Activated T-helper 1 cell treated with anti-CD3 and anti-CD28 coated beads, Interleukin-12 subunit alpha, Interleukin-12 subunit beta, Interleukin-2, Interleukin-4 antibody, amounts not matched to agents 30 ng/mL and 10 ng/mL and 1 ng/mL, durations not matched to agents 14 hours and 24 hours and 36 hours (primary cell): ENCODE measurements at regions of chr3 and their contacts with region 1.

Region 1: GRCh38 chr3:67654099-67654843 is at the start of gene SUCLG2:
- DNase-seq: peak; percentile 78
- H3K4me3 Mint-ChIP-seq: peak within 1 kb of the TSS; percentile 82
- H3K27ac Mint-ChIP-seq: peak within 1 kb of the TSS; percentile 85
- H3K4me1 Mint-ChIP-seq: peaks cover 59% of the 10 kb centered on the region
- H3K27me3 Mint-ChIP-seq: no peaks in the 10 kb centered on the region
- total RNA-seq, gene SUCLG2: 30.3 and 31.0 TPM in 2 replicates

Region 2: GRCh38 chr3:66472313-66473134 is 1181.7 kb before region 1 on chr3:
- intact Hi-C with region 1: loop called (anchors 10 kb)
- DNase-seq: peak; percentile 48
- H3K4me3 Mint-ChIP-seq: peak overlapping the region; percentile 76
- H3K27ac Mint-ChIP-seq: no peak overlapping the region
- H3K4me1 Mint-ChIP-seq: peaks cover 44% of the 10 kb centered on the region
- H3K27me3 Mint-ChIP-seq: no peaks in the 10 kb centered on the region

Region 3: DNA sequence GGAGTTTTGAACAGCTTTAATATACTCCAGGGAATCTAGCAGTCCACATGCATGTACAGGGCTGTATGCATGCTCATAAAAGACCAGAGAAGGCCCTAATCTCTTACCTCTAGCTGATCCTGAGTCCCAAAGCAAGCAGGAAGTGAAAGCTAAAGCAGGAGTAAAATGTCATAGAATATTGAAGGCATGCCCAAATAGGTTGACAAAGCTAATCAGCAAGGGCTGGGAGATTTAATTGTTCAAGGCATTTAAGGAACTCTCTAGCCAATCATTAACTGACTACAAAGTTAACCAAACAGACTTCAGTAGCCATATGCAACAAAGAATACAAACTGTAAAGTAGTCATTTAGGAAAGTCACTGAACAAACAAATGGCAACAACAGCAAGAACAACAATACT is 742.0 kb before region 1 on chr3:
- intact Hi-C with region 1: no loop called
- DNase-seq: no peak
- H3K4me3 Mint-ChIP-seq: no peak overlapping the region
- H3K27ac Mint-ChIP-seq: no peak overlapping the region
- H3K4me1 Mint-ChIP-seq: no peaks in the 10 kb centered on the region
- H3K27me3 Mint-ChIP-seq: no peaks in the 10 kb centered on the region

Region 4: DNA sequence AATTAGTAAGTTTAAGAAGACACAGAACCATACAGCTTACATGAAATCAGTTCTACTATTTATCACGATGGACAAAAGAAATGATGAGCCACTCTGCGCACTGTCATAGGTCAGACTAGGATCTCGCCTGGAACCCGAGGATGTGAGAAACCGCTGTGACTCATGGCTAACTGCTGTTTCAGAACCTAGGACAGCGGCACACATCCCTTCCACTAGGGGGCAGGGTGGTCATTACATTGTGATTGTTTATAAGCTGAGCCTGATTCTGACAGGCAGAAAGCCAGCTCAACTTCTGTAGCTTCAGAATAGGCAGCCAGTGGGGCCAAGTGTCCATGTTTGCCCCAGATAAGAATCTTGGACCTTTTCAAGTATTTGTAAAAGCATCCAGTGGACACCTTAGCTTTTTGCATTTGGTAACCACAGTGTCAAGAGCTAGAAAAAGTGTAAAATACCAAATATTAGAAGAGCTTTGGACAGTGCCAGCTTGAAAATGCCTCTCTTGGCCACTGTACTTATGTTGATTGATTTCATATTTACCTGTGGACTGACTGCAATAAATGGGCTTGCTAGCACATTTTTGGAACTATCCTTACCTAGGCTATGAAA is 540.4 kb before region 1 on chr3:
- intact Hi-C with region 1: loop called (anchors 5 kb)
- DNase-seq: peak; percentile 65
- H3K4me3 Mint-ChIP-seq: no peak overlapping the region
- H3K27ac Mint-ChIP-seq: no peak overlapping the region
- H3K4me1 Mint-ChIP-seq: peaks cover 7% of the 10 kb centered on the region
- H3K27me3 Mint-ChIP-seq: no peaks in the 10 kb centered on the region

Region 5: GRCh38 chr3:67278015-67278618 is 376.2 kb before region 1 on chr3:
- intact Hi-C with region 1: no loop called
- DNase-seq: no peak
- H3K4me3 Mint-ChIP-seq: no peak overlapping the region
- H3K27ac Mint-ChIP-seq: no peak overlapping the region
- H3K4me1 Mint-ChIP-seq: no peaks in the 10 kb centered on the region
- H3K27me3 Mint-ChIP-seq: no peaks in the 10 kb centered on the region

Region 6: GRCh38 chr3:67635257-67635656 is 19.0 kb before region 1 on chr3:
- intact Hi-C with region 1: loop called (anchors 1 kb)
- DNase-seq: no peak
- H3K4me3 Mint-ChIP-seq: no peak overlapping the region
- H3K27ac Mint-ChIP-seq: no peak overlapping the region
- H3K4me1 Mint-ChIP-seq: peaks cover 25% of the 10 kb centered on the region
- H3K27me3 Mint-ChIP-seq: no peaks in the 10 kb centered on the region

Region 7: GRCh38 chr3:67765575-67765974 is 111.3 kb after region 1 on chr3:
- intact Hi-C with region 1: no loop called
- DNase-seq: no peak
- H3K4me3 Mint-ChIP-seq: no peak overlapping the region
- H3K27ac Mint-ChIP-seq: no peak overlapping the region
- H3K4me1 Mint-ChIP-seq: no peaks in the 10 kb centered on the region
- H3K27me3 Mint-ChIP-seq: no peaks in the 10 kb centered on the region

Region 8: DNA sequence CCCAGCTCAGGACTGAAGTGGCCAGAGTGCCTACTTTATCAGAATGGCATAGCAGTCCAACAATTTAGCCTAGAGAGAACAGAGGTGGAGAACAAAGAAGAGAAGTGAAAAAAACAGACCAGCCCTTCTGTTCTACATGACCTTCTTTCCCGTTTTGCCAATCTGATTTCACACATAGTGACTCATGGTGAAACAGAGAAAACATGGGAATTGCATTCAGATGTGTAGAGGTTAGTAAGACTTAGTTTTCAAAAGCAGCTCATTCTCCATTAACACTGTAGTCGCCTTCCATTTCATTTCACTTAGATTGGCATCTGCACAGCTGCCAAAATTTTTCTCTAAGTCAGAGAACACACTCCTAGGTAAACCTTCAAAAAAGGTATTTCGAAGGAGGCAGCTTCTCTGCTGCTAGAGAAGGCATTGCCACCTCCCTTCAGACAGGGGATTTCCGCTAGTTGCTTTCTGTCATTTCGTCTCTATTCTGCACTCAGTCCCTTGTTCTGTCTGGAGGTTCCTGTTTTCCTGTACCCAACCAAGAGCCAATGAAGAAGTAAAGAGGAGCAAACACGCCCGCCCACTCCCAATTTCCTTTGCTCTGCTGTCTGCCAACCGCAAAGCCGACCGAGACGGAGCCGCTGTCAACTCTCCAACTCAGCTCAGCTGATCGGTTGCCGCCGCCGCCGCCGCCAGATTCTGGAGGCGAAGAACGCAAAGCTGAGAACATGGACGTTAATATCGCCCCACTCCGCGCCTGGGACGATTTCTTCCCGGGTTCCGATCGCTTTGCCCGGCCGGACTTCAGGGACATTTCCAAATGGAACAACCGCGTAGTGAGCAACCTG is 1430.3 kb after region 1 on chr3 and contains the start of gene ARL6IP5:
- intact Hi-C with region 1: loop called (anchors 5 kb)
- DNase-seq: peak; percentile 89
- H3K4me3 Mint-ChIP-seq: peak within 1 kb of the TSS; percentile 98
- H3K27ac Mint-ChIP-seq: peak within 1 kb of the TSS; percentile 94
- H3K4me1 Mint-ChIP-seq: peaks cover 61% of the 10 kb centered on the region
- H3K27me3 Mint-ChIP-seq: no peaks in the 10 kb centered on the region
- total RNA-seq, gene ARL6IP5: 147 and 156 TPM in 2 replicates